Naive thymus-derived CD4-positive, alpha-beta T cell (primary cell): ENCODE measurements at regions of chr11 and their contacts with region 1.

Region 1: DNA sequence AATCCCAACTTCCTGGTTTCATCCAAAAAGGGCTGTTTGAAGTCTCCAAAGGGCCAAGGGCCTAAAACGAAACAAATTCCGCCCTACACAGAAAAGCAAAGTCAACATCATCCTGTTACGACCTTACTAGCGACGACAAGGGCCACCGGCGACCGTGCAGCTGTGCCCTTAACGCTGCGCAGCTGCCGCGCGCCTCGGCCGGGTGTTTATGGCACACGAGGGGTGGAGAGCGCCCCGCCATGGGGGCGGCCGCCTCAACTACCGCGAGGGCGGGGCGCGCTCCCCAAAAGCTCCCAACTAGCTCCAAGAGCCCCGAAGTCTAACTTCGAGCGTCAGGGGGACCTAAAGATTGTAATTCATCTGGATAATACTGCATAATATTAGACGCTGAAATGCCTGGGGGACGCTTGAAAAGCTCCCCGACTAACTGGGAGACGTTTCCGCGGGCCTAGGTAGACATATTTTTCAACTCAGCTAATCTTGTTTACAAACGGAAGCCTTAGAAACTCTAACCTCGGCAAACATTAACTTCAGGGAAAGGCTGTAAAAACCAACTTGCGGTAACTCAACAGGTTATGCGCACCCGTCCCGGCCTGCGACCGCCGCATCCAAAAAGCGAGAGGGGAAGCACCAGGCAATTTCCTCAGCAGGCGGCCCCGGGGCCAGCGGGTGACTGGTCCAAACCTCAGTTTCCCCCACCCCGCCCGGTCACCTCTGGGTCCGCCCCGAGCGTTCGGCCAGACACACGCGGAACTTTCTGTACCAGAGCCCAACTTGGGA is 694 bp downstream of the TMEM123 start:
- DNase-seq: peak; percentile 64 to 82 (median 77)
- ATAC-seq: peak; percentile 74
- H3K4me3 ChIP-seq: peak overlapping the region; percentile 71
- H3K4me3 Mint-ChIP-seq: peak overlapping the region; percentile 88 to 99 (median 96)
- H3K27ac ChIP-seq: peak overlapping the region; percentile 80
- H3K27ac Mint-ChIP-seq: peak overlapping the region; percentile 93 to 98 (median 94)
- H3K4me1 ChIP-seq: peaks cover 48 to 52% of the 10 kb centered on the region in 2 donors
- H3K4me1 Mint-ChIP-seq: peaks cover 57 to 81% (median 71%) of the 10 kb centered on the region in 7 donors
- H3K27me3 ChIP-seq: no peaks in the 10 kb centered on the region
- H3K27me3 Mint-ChIP-seq: no peaks in the 10 kb centered on the region

Region 2: DNA sequence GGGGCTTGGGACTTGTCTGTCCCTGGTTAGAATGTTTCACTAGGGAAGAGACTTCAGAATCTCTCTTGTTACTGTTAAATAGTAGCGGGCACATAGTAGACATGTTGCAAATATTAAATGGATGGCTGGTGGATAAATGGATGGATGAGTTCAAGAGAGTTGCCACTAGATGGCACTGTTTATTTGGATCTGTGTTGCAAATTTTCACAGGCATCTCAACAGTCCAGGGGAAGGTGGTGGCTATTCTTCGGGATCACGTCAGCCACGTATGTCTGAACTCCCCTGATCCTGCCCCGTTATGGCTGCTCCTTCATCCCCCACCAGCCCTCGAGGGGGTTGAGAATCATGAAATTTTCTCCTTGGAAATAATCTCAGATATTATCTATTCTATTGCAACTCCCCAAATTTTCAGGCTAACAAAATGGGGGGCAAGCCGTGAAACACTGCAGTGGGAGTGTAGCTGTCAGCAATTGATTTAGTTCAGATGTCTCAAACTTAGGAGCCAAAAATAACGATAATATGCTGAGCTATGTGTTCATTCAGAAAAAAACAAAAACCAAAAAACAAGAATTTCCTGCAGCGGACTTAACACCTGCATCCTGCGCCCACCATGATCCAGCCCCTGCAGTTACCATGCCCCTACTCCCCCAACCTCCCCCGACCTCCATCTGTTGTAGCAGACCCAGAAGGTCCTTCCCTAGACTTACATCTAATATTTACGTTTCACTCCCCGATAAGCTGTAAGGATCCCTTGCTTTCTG is 163.7 kb before region 1 on chr11:
- CTCF ChIA-PET with region 1: interaction called, 3 read pairs
- POLR2A ChIA-PET with region 1: interaction called, 3 read pairs
- intact Hi-C with region 1: loop called in 1 of 2 experiments (anchors 1 kb)
- DNase-seq: peak in 7 of 9 donors; percentile 51 to 73 (median 66)
- ATAC-seq: peak; percentile 86
- H3K4me3 ChIP-seq: no peak overlapping the region
- H3K4me3 Mint-ChIP-seq: peak overlapping the region in 9 of 10 donors; percentile 12 to 73 (median 60)
- H3K27ac ChIP-seq: no peak overlapping the region
- H3K27ac Mint-ChIP-seq: peak overlapping the region in 6 of 9 donors; percentile 15 to 56 (median 38)
- H3K4me1 ChIP-seq: peaks cover 3 to 5% of the 10 kb centered on the region in 2 donors
- H3K4me1 Mint-ChIP-seq: peaks cover 9 to 33% (median 27%) of the 10 kb centered on the region in 7 donors
- H3K27me3 ChIP-seq: no peaks in the 10 kb centered on the region
- H3K27me3 Mint-ChIP-seq: no peaks in the 10 kb centered on the region

Region 3: DNA sequence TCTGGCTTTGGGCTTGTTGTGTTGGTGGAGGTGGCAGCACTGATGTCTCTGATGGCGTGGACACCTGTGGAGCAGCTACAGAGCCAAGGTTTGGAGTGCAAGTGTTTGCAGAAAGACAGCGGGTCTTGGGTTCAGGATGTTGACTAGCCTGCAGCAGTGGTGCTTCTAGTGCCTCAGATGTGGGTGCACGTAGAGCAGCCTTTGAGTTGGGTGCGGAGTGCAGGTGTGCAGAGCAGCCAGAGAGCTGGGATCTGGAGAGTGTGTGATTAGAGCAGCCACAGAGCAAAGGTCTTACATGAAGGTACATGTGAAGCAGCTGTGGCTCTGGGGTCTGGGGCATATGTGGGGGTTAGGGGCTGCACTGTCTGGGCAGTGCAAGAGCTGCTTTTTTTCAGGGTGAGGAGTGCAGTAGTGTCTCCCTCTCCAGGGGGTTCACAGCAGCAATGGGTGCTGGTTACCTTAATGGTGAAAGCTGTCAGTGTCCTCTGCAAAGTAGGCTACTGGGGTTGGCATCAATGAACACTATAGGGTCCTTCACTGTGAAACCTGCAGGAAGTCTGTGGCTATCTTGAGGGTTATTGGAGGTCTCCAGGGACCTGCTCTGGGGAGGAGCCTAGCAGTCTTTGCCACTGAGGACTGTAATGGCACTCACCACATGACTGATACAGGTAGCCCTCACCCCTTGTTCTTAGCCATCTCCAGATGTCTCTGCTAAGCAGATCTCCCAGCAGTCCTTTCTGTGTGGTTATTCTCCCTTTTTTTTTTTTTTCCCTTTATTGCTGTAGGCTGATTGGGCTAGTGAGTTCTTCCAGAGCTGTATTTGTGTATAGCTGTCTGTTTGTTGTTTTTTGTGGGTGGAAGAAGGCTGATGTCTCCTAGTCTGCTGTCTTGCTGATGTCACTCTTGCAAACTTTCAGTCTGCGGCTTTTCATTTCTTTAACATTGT is 90.5 kb before region 1 on chr11:
- CTCF ChIA-PET with region 1: interaction called, 11 read pairs
- POLR2A ChIA-PET with region 1: interaction called, 9 read pairs
- intact Hi-C with region 1: loop called in 1 of 2 experiments (anchors 2 kb)
- DNase-seq: peak in 8 of 9 donors; percentile 11 to 82 (median 76)
- ATAC-seq: peak; percentile 83
- H3K4me3 ChIP-seq: peak overlapping the region; percentile 42
- H3K4me3 Mint-ChIP-seq: peak overlapping the region; percentile 72 to 87 (median 77)
- H3K27ac ChIP-seq: peak overlapping the region; percentile 80
- H3K27ac Mint-ChIP-seq: peak overlapping the region; percentile 86 to 99 (median 97)
- H3K4me1 ChIP-seq: peaks cover 15 to 29% of the 10 kb centered on the region in 2 donors
- H3K4me1 Mint-ChIP-seq: peaks cover 27 to 71% (median 50%) of the 10 kb centered on the region in 7 donors
- H3K27me3 ChIP-seq: no peaks in the 10 kb centered on the region
- H3K27me3 Mint-ChIP-seq: no peaks in the 10 kb centered on the region

Region 4: GRCh38 chr11:102396708-102397563 is 54.9 kb before region 1 on chr11:
- CTCF ChIA-PET with region 1: interaction called, 11 read pairs
- POLR2A ChIA-PET with region 1: interaction called, 33 read pairs
- intact Hi-C with region 1: no loop called
- DNase-seq: peak in 1 of 9 donors; percentile 13
- ATAC-seq: no peak
- H3K4me3 ChIP-seq: no peak overlapping the region
- H3K4me3 Mint-ChIP-seq: peak overlapping the region in 9 of 10 donors; percentile 22 to 69 (median 43)
- H3K27ac ChIP-seq: peak overlapping the region; percentile 33
- H3K27ac Mint-ChIP-seq: peak overlapping the region; percentile 18 to 87 (median 73)
- H3K4me1 ChIP-seq: peaks cover 0 to 24% of the 10 kb centered on the region in 2 donors
- H3K4me1 Mint-ChIP-seq: peaks cover 12 to 67% (median 52%) of the 10 kb centered on the region in 7 donors
- H3K27me3 ChIP-seq: no peaks in the 10 kb centered on the region
- H3K27me3 Mint-ChIP-seq: no peaks in the 10 kb centered on the region

Region 5: GRCh38 chr11:102430158-102430836 is 21.6 kb before region 1 on chr11:
- CTCF ChIA-PET with region 1: interaction called, 4 read pairs
- POLR2A ChIA-PET with region 1: interaction called, 11 read pairs
- intact Hi-C with region 1: no loop called
- DNase-seq: peak in 1 of 9 donors; percentile 31
- ATAC-seq: peak; percentile 56
- H3K4me3 ChIP-seq: no peak overlapping the region
- H3K4me3 Mint-ChIP-seq: peak overlapping the region; percentile 10 to 74 (median 51)
- H3K27ac ChIP-seq: peak overlapping the region; percentile 31
- H3K27ac Mint-ChIP-seq: peak overlapping the region; percentile 24 to 95 (median 87)
- H3K4me1 ChIP-seq: peaks cover 0 to 33% of the 10 kb centered on the region in 2 donors
- H3K4me1 Mint-ChIP-seq: peaks cover 51 to 93% (median 71%) of the 10 kb centered on the region in 7 donors
- H3K27me3 ChIP-seq: no peaks in the 10 kb centered on the region
- H3K27me3 Mint-ChIP-seq: no peaks in the 10 kb centered on the region

Region 6: GRCh38 chr11:102470251-102470650 is 18.4 kb after region 1 on chr11:
- CTCF ChIA-PET with region 1: interaction called, 5 read pairs
- POLR2A ChIA-PET with region 1: interaction called, 23 read pairs
- intact Hi-C with region 1: loop called (anchors 1 kb)
- DNase-seq: peak in 7 of 9 donors; percentile 55 to 79 (median 74)
- ATAC-seq: peak; percentile 85
- H3K4me3 ChIP-seq: no peak overlapping the region
- H3K4me3 Mint-ChIP-seq: peak overlapping the region; percentile 46 to 85 (median 78)
- H3K27ac ChIP-seq: no peak overlapping the region
- H3K27ac Mint-ChIP-seq: peak overlapping the region; percentile 50 to 90 (median 68)
- H3K4me1 ChIP-seq: peaks cover 33 to 74% of the 10 kb centered on the region in 2 donors
- H3K4me1 Mint-ChIP-seq: peaks cover 55 to 95% (median 93%) of the 10 kb centered on the region in 7 donors
- H3K27me3 ChIP-seq: no peaks in the 10 kb centered on the region
- H3K27me3 Mint-ChIP-seq: no peaks in the 10 kb centered on the region

Region 7: DNA sequence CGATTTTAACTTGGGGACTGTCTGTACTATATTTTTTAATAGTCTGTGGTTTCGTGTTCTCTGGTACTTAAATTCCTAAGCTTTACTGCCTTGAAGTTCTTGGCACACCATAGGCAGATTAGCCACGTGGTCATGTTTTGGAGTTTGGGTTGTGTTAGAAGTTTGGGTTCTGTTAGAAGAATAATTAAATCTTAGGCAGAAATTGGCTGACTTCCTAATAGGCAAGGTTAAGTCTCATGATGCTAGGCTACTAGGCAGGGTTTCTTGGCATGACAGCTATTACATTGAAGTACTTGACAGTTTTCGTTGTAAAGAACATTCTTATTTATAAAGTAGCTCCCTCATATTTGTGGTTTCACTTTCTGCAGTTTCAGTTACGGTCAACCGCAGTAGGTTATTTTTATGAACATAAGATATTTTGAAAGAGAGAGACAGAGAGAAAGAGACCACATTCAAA is 108.7 kb after region 1 on chr11:
- CTCF ChIA-PET with region 1: no interaction called
- POLR2A ChIA-PET with region 1: interaction called, 3 read pairs
- intact Hi-C with region 1: loop called in 1 of 2 experiments (anchors 5 kb)
- DNase-seq: peak in 6 of 9 donors; percentile 2 to 34 (median 12)
- ATAC-seq: peak; percentile 54
- H3K4me3 ChIP-seq: peak overlapping the region; percentile 34
- H3K4me3 Mint-ChIP-seq: peak overlapping the region; percentile 42 to 81 (median 78)
- H3K27ac ChIP-seq: peak overlapping the region; percentile 63
- H3K27ac Mint-ChIP-seq: peak overlapping the region; percentile 70 to 96 (median 88)
- H3K4me1 ChIP-seq: peaks cover 21 to 28% of the 10 kb centered on the region in 2 donors
- H3K4me1 Mint-ChIP-seq: peaks cover 27 to 50% (median 45%) of the 10 kb centered on the region in 7 donors
- H3K27me3 ChIP-seq: no peaks in the 10 kb centered on the region
- H3K27me3 Mint-ChIP-seq: peaks cover 0 to 2% (median 0%) of the 10 kb centered on the region in 5 donors